GM12878 (cell line): ENCODE measurements at regions of chr6 and their contacts with region 1.

Region 1: DNA sequence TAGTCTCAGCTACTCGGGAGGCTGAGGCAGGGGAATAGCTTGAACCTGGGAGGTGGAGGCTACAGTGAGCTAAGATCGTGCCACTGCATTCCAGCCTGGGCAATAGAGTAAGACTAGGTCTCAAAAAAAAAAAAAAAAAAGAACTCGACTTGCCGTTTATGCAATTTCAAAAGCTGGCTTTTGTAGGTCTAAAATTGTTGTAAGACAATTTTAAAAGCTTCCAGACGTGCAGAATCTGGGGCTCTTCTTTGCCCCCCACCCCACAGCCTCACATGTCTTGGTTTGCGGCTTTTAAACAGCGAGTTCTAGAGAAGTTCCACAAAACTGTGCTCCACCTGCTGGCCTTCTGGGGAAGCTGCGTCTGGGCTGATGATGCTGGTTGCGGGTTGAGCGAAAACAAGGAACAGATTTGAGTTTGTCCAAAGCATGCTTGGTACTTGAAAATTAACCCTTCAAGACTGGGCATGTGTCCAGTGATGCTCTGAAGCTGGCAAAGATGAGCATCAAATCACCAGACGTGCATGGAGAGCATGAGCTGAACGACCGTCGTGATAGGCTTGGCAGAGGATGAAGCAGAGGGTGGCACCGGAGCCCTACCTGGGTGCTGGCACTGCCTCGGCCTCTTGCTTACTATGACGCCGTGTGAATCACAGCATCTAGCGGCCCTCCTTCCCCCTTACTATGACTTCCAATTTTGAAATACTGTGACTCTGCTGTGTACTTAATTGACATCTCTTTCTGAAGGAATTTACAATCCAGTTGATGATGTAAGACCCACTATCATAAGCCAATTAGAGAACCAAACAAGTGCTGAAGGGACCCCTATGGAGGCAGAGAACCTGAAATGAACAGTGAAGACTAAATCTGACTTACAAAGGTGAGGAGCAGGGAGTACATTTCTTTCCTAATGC is 171.4 kb downstream of the GMPR start:
- DNase-seq: no peak
- ATAC-seq: peak; percentile 40
- H3K4me3 ChIP-seq: no peak overlapping the region
- H3K27ac ChIP-seq: no peak overlapping the region
- H3K4me1 ChIP-seq: peaks cover 11% of the 10 kb centered on the region
- H3K27me3 ChIP-seq: no peaks in the 10 kb centered on the region
- CTCF ChIP-seq: peak; percentile 60 to 86 (median 83)
- EP300 ChIP-seq: no peak
- POLR2A ChIP-seq: no peak
- RAD21 ChIP-seq: peak; percentile 79

Region 2: GRCh38 chr6:16277101-16277981 is 132.4 kb before region 1 on chr6:
- CTCF ChIA-PET with region 1: no interaction called
- POLR2A ChIA-PET with region 1: no interaction called
- RAD21 ChIA-PET with region 1: no interaction called
- SMC1A ChIA-PET with region 1: no interaction called
- in situ Hi-C with region 1: no loop called
- intact Hi-C with region 1: no loop called
- DNase-seq: no peak
- ATAC-seq: peak; percentile 88
- H3K4me3 ChIP-seq: no peak overlapping the region
- H3K27ac ChIP-seq: no peak overlapping the region
- H3K4me1 ChIP-seq: no peaks in the 10 kb centered on the region
- H3K27me3 ChIP-seq: no peaks in the 10 kb centered on the region; a peak in 2 of 4 replicates
- CTCF ChIP-seq: peak; percentile 34 to 39 (median 37); a peak in 4 of 6 replicates
- EP300 ChIP-seq: no peak
- POLR2A ChIP-seq: no peak
- RAD21 ChIP-seq: peak; percentile 44

Region 3: DNA sequence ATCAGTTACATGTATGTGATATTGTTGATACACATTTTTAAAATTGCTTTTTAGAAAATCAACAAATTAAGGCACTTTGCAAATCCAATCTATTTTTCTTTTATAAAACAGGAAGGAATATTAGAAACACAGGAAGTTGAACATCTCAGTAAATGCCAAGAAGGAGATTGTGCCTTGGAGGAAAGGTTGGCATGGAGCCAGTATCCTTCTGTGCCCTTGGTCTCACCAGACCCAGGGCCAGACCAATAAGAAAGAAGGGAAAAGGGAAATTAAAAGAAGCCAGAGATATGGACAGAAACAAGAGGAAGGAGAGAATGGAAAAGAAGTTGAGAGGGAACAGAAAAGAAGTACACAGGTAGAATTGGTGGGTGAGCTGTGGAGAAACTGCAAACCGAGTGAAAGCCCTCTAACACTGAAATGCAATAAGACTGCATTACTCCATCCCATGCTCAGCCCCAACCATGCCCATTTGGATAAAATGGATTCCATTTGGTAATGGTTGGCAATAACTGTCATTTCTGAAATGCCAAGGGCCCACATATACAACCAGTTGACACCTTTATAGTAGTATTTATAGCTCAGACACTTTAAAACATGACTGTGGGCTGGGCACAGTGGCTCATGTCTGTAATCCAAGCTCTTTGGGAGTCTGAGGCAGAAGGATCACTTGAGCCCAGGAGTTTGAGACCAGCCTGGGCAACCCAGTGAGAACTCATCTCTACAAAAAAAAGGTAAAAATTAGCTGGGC is 37.6 kb before region 1 on chr6:
- CTCF ChIA-PET with region 1: interaction called, 9 read pairs
- POLR2A ChIA-PET with region 1: interaction called, 7 read pairs
- RAD21 ChIA-PET with region 1: interaction called, 9 read pairs
- SMC1A ChIA-PET with region 1: interaction called, 12 read pairs
- in situ Hi-C with region 1: no loop called
- intact Hi-C with region 1: no loop called
- DNase-seq: no peak
- ATAC-seq: no peak
- H3K4me3 ChIP-seq: no peak overlapping the region
- H3K27ac ChIP-seq: no peak overlapping the region
- H3K4me1 ChIP-seq: peaks cover 23% of the 10 kb centered on the region
- H3K27me3 ChIP-seq: no peaks in the 10 kb centered on the region
- CTCF ChIP-seq: no peak
- EP300 ChIP-seq: no peak
- POLR2A ChIP-seq: no peak
- RAD21 ChIP-seq: no peak

Region 4: GRCh38 chr6:16432075-16433032 is 22.6 kb after region 1 on chr6:
- CTCF ChIA-PET with region 1: interaction called, 10 read pairs
- POLR2A ChIA-PET with region 1: interaction called, 6 read pairs
- RAD21 ChIA-PET with region 1: interaction called, 33 read pairs
- SMC1A ChIA-PET with region 1: interaction called, 28 read pairs
- in situ Hi-C with region 1: no loop called
- intact Hi-C with region 1: no loop called
- DNase-seq: peak; percentile 77
- ATAC-seq: peak; percentile 78
- H3K4me3 ChIP-seq: peak overlapping the region; percentile 14; the same call in 1 of the 2 replicates
- H3K27ac ChIP-seq: peak overlapping the region; percentile 39
- H3K4me1 ChIP-seq: peaks cover 45% of the 10 kb centered on the region
- H3K27me3 ChIP-seq: no peaks in the 10 kb centered on the region
- CTCF ChIP-seq: no peak
- EP300 ChIP-seq: 0 out of 4 replicates have a peak, but pooled peaks of 1 of the 2 experiments have one; percentile 7
- POLR2A ChIP-seq: no peak
- RAD21 ChIP-seq: 0 out of 2 replicates have a peak, but pooled peaks have one; percentile 1

Region 5: DNA sequence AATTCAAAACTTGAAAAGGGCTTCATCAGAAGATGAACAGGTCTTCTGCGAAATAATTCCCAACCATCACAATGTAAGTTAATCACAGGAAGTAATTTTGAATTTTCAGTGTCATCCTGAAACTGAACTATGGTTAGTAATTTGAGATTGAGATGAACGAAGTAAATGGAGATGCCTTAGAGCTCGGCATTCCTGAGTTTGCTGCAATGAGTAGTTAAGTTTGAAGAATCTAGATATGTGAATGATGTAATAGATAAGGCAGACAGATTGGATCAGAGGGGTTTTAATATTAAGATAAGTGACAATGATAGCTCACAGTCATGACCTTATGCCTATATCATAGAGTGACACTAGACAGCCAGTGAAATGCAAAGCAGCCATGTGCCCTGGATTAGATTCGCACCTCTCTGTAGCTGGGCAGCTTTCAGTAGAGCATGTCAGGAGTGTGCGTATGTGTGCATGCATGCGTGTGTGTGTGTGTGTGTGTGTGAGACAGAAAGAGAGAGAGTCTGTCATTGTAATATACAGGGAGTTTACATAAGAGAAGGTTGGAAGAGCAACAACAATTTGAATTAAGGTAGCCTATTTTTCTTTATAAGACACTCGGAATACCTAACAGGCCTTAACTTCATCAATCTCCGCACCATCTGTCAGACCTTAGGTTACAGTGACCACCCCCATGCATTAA is 61.6 kb after region 1 on chr6:
- CTCF ChIA-PET with region 1: interaction called, 23 read pairs
- POLR2A ChIA-PET with region 1: interaction called, 12 read pairs
- RAD21 ChIA-PET with region 1: interaction called, 79 read pairs
- SMC1A ChIA-PET with region 1: interaction called, 116 read pairs
- in situ Hi-C with region 1: no loop called
- intact Hi-C with region 1: no loop called
- DNase-seq: peak; percentile 76
- ATAC-seq: peak; percentile 71
- H3K4me3 ChIP-seq: 0 out of 2 replicates have a peak overlapping the region, but pooled peaks have one; percentile 9
- H3K27ac ChIP-seq: peak overlapping the region; percentile 90
- H3K4me1 ChIP-seq: peaks cover 71% of the 10 kb centered on the region
- H3K27me3 ChIP-seq: no peaks in the 10 kb centered on the region
- CTCF ChIP-seq: no peak
- EP300 ChIP-seq: peak; percentile 74 to 81; a peak in 3 of 4 replicates
- POLR2A ChIP-seq: peak; percentile 47; the same call in 1 of the 2 replicates
- RAD21 ChIP-seq: no peak

Region 6: GRCh38 chr6:16487996-16488674 is 78.3 kb after region 1 on chr6:
- CTCF ChIA-PET with region 1: interaction called, 7 read pairs
- POLR2A ChIA-PET with region 1: interaction called, 14 read pairs
- RAD21 ChIA-PET with region 1: interaction called, 29 read pairs
- SMC1A ChIA-PET with region 1: interaction called, 42 read pairs
- in situ Hi-C with region 1: no loop called
- intact Hi-C with region 1: no loop called
- DNase-seq: no peak
- ATAC-seq: peak; percentile 7
- H3K4me3 ChIP-seq: peak overlapping the region; percentile 49; the same call in 1 of the 2 replicates
- H3K27ac ChIP-seq: peak overlapping the region; percentile 40; the same call in 1 of the 2 replicates
- H3K4me1 ChIP-seq: peaks cover 69% of the 10 kb centered on the region
- H3K27me3 ChIP-seq: no peaks in the 10 kb centered on the region
- CTCF ChIP-seq: no peak
- EP300 ChIP-seq: peak in 1 of 2 experiments; percentile 41; a peak in 1 of 4 replicates
- POLR2A ChIP-seq: no peak
- RAD21 ChIP-seq: no peak

Region 7: GRCh38 chr6:16503970-16504415 is 94.2 kb after region 1 on chr6:
- CTCF ChIA-PET with region 1: interaction called, 12 read pairs
- POLR2A ChIA-PET with region 1: interaction called, 3 read pairs
- RAD21 ChIA-PET with region 1: interaction called, 16 read pairs
- SMC1A ChIA-PET with region 1: interaction called, 27 read pairs
- in situ Hi-C with region 1: no loop called
- intact Hi-C with region 1: no loop called
- DNase-seq: peak; percentile 92
- ATAC-seq: peak; percentile 85
- H3K4me3 ChIP-seq: no peak overlapping the region; the same call in 1 of the 2 replicates
- H3K27ac ChIP-seq: peak overlapping the region; percentile 70
- H3K4me1 ChIP-seq: peaks cover 50% of the 10 kb centered on the region
- H3K27me3 ChIP-seq: no peaks in the 10 kb centered on the region
- CTCF ChIP-seq: no peak
- EP300 ChIP-seq: peak; percentile 85 to 90
- POLR2A ChIP-seq: no peak
- RAD21 ChIP-seq: no peak

Region 8: GRCh38 chr6:16816891-16817290 is 407.1 kb after region 1 on chr6:
- CTCF ChIA-PET with region 1: no interaction called
- POLR2A ChIA-PET with region 1: no interaction called
- RAD21 ChIA-PET with region 1: no interaction called
- SMC1A ChIA-PET with region 1: no interaction called
- in situ Hi-C with region 1: no loop called
- intact Hi-C with region 1: no loop called
- DNase-seq: no peak
- ATAC-seq: no peak
- H3K4me3 ChIP-seq: no peak overlapping the region
- H3K27ac ChIP-seq: no peak overlapping the region
- H3K4me1 ChIP-seq: no peaks in the 10 kb centered on the region
- H3K27me3 ChIP-seq: no peaks in the 10 kb centered on the region
- CTCF ChIP-seq: no peak
- EP300 ChIP-seq: no peak
- POLR2A ChIP-seq: no peak
- RAD21 ChIP-seq: no peak